ENCODE measurements at regions of chr5 and their contacts with region 1.

Region 1: DNA sequence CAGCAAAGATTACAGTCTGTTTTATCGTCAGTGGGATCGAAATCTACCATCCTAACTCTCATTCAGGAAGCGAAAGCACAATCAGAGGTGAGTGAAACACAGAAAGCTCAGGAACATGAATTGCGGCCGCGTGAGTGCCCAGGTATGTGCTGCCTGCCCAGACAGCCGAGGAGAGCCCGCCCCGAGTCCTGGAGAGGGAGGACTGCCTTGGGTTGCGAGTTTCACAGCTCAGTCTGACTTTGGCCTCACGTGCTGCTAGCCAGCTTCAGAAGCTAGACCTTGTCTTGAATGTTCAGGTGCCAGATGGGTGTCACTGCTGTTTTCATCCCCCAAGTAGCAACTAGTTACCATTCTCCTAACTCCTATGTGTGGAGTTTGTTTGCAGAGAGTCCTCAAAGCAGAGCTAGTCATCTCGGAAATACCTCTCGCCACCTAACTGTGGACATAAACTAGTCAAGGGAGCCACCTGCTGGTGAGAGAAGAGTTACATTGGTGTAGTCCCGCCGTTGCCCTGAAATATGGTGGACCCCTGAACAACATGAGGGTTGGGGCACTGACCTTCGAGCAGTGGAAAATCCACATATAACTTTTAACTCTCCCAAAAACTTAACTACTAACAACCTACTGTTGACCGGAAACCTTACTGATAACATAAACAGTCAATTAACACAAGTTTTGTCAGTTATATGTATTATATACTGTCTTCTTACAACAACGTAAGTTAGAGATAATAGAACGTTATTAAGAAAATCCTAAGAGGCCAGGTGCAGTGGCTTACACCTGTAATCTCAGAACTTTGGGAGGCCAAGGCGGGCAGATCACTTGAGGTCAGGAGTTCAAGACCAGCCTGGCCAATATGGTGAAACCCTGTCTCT is 80.9 kb downstream of the GOLPH3 start:
- DNase-seq: peak; percentile 29 to 82
- ATAC-seq: peak; percentile 80 to 91 (median 88)
- H3K4me3 ChIP-seq: no peak overlapping the region
- H3K4me3 Mint-ChIP-seq: no peak overlapping the region
- H3K27ac ChIP-seq: no peak overlapping the region
- H3K27ac Mint-ChIP-seq: peak overlapping the region; percentile 29 to 42
- H3K4me1 ChIP-seq: no peaks in the 10 kb centered on the region
- H3K4me1 Mint-ChIP-seq: peaks cover 5 to 6% of the 10 kb centered on the region in 2 donors
- H3K27me3 ChIP-seq: no peaks in the 10 kb centered on the region
- H3K27me3 Mint-ChIP-seq: no peaks in the 10 kb centered on the region
- CTCF ChIP-seq: peak; percentile 74

Region 2: DNA sequence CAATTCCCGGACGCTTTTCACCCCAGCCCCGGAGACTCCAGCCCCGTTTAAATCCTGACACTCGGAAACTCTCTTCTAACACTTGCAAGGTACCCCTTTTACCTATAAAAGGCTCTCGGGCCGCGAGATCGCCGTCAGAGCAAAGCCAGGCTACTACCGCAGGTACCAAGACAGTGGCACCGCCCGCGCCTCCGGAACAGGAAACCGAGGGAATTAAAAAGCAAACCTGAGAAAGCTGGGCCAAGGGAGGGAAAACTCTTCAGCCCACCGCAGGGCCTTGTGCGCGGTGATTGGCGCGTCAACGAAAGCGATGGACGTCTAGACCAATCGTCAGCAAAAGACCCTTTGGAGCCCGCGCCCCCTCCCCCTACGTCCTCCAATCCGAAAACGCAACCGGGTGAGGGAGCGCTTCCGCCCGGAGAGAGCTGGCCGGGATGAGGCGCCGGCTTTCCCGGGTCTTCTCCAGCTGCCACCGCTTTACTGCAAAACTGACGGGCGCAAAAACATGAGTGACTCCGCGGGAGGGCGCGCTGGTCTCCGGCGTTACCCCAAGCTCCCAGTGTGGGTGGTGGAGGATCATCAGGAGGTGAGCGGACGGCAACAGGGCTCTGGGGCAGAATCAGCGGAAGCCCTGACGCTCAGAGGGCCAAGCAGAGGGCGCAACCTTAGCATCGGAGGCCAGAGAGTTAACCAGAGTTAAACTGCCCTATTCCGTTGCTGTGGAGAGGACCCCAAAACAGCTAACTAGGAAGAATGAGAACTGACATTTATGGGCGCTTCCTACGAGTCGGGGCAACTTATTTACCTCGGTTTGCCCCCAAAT is 561.1 kb before region 1 on chr5 and contains the starts of genes C5orf22 and DROSHA:
- intact Hi-C with region 1: loop called (anchors 5 kb)
- DNase-seq: peak; percentile 86 to 96
- ATAC-seq: peak; percentile 96 to 99 (median 98)
- H3K4me3 ChIP-seq: peak within 1 kb of the TSS; percentile 92
- H3K4me3 Mint-ChIP-seq: peak within 1 kb of the TSS; percentile 98
- H3K27ac ChIP-seq: peak within 1 kb of the TSS; percentile 65
- H3K27ac Mint-ChIP-seq: peak within 1 kb of the TSS; percentile 94 to 95
- H3K4me1 ChIP-seq: peaks cover 25% of the 10 kb centered on the region
- H3K4me1 Mint-ChIP-seq: peaks cover 53 to 64% of the 10 kb centered on the region in 2 donors
- H3K27me3 ChIP-seq: no peaks in the 10 kb centered on the region
- H3K27me3 Mint-ChIP-seq: no peaks in the 10 kb centered on the region
- CTCF ChIP-seq: no peak
- total RNA-seq, gene C5orf22: 20.0 to 27.9 (median 21.4) TPM
- total RNA-seq, gene DROSHA: 44.9 to 55.9 (median 50.5) TPM

Region 3: DNA sequence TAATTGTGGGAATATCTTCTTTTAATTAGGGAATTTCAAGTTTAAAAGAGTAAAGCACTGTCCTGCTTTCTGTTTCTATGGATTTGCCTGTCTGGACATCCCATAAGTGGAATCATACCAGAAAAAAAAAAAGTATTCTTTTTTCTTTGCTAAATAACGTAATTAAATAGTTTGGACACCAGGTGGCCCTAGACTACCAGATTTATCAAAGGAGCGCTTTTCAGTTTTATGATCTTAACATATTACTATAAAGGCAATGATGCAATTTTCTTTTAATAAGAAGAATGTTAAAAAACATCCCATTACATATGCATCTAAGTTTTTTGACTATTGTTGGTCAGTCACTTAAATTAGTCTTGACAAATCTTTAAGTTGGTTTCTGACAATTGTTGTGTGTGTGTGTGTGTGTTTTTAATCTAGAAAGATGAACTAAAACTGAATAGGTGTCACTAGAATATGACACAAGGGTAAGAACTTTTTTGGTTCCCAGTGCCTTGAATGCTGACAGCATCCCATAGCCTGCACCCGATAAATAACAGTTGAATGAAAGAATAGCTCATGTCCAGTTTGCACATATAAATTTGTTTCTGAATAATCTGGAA is 511.6 kb before region 1 on chr5:
- intact Hi-C with region 1: loop called (anchors 1 kb)
- DNase-seq: peak in 1 of 2 donors; percentile 61
- ATAC-seq: peak in 1 of 3 donors; percentile 53
- H3K4me3 ChIP-seq: no peak overlapping the region
- H3K4me3 Mint-ChIP-seq: no peak overlapping the region
- H3K27ac ChIP-seq: no peak overlapping the region
- H3K27ac Mint-ChIP-seq: no peak overlapping the region
- H3K4me1 ChIP-seq: no peaks in the 10 kb centered on the region
- H3K4me1 Mint-ChIP-seq: no peaks in the 10 kb centered on the region
- H3K27me3 ChIP-seq: no peaks in the 10 kb centered on the region
- H3K27me3 Mint-ChIP-seq: peaks cover 13 to 16% of the 10 kb centered on the region in 2 donors
- CTCF ChIP-seq: peak; percentile 73

Region 4: DNA sequence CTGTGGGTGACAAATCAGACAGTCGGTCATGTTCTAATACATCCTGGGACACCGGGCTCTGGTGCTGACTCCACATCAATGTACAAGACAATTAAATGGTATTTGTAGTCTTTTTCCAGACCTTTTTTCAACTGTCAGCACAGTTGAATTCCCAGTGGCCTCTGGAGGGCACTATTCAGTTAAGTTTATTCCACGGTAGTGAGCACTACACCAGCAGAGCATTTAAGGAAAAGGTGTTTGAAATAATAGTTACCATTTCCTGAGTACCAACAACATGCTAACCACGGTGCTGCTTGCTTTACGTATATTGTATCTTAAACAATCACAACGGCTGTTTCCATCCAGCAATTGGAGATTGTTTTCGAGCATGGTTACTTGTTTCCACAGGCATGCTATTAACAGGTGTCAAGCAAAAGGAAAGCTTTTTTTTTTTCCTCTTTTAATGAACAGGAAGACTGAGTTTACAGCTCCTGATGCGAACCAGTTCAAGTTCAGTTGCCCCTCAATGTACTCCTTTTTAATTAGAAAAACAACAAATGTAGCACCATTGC is 267.6 kb before region 1 on chr5:
- intact Hi-C with region 1: loop called (anchors 1 kb)
- DNase-seq: peak in 1 of 2 donors; percentile 69
- ATAC-seq: peak; percentile 66 to 94 (median 74)
- H3K4me3 ChIP-seq: no peak overlapping the region
- H3K4me3 Mint-ChIP-seq: no peak overlapping the region
- H3K27ac ChIP-seq: no peak overlapping the region
- H3K27ac Mint-ChIP-seq: no peak overlapping the region
- H3K4me1 ChIP-seq: no peaks in the 10 kb centered on the region
- H3K4me1 Mint-ChIP-seq: peaks cover 0 to 7% of the 10 kb centered on the region in 2 donors
- H3K27me3 ChIP-seq: no peaks in the 10 kb centered on the region
- H3K27me3 Mint-ChIP-seq: peaks cover 19 to 21% of the 10 kb centered on the region in 2 donors
- CTCF ChIP-seq: peak; percentile 41

Measured in natural killer cell (primary cell).